G401 (cell line): ENCODE measurements at regions of chr3 and their contacts with region 1.

Region 1: DNA sequence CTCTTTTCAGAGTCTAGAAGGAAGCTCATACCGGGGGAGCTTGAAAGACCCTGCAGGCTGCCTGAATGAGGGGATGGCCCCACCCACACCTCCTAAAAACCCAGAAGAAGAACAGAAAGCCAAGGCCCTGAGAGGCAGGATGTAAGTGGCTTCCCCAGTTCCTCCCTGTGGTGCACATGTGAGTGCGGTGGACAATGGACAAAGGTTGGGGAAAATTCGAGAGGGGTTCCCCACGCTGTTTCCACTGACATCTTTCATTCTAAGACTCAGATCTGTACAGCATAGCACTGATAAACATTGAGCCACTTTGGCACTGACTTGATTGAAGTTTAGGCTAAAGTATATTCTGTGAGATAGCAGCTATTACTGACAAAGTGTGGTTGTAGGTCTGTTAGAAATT is 79.5 kb upstream of the UMPS start:
- DNase-seq: no peak

Region 2: DNA sequence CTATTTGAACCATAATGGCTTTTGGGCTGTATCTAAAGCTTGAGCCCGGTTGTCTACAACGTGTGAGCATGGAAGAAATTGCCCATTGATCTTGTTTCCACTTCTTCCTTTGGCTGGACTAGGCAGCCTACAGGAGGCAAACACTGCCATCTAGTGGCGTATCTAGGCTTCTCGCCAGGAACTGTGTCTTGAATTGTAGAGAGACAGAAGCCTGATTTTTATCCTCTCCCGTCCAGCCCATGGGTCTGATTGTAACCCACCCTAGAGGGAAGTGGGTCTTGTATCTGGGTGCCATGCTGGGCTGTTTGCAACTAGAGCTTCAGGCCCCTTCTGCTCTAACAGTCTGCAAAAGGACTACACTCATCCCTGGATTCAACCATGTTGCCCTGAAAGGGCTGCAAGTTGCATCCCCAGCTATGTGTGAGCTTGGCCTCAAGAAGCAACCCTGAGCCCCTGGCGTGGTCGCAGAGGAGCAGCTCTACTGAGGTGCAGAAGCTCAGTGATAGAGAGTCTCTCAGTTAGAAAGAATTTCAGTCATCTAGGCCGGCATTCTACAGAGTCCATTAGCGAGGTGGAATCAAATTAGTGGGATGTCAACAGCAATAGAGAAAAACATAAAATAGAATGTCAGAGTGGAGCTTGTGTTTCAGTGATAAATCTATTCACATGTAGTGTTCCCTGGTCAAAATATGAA is 90.8 kb before region 1 on chr3:
- in situ Hi-C with region 1: loop called (anchors 25 kb)
- DNase-seq: peak; percentile 79

Region 3: GRCh38 chr3:124688581-124689454 is 38.0 kb after region 1 on chr3:
- in situ Hi-C with region 1: no loop called
- DNase-seq: peak; percentile 60

Region 4: DNA sequence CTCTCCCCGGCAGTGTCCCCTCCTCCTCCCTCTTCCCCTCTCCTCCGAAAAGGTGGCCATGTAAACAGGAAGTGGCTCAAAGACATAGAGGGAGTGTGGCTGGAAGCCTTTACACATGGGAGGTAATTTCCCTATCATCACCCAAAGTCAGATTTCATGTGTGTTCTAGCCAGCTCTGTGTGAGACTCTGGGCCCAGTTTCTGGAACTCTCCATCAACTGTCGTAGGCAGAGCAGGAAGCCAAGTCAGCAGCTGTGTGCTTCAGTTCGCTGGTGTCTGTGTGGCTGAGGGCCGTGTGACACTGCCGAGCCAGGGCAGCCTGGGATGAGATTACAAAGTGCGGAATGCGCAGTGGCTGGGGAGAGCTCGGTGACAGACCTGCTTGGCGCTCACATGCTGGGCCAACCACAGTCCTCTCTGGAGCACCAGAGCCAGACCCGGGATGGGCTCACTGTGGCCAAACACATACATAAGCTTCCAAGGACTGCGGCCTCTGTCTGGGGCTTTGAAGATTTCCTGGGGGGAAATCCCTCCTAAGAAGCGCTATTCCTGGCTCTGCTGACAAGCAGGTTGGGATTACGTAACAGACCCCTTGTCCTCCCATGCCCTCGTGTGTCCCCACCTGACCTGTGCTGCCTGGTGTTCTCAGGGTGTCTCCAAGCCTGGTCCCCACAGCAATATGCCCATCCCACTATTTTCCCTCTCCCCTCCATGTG is 130.1 kb after region 1 on chr3:
- in situ Hi-C with region 1: no loop called
- DNase-seq: peak; percentile 88